AG04450 (cell line): ENCODE measurements at regions of chr16 and their contacts with region 1.

Region 1: DNA sequence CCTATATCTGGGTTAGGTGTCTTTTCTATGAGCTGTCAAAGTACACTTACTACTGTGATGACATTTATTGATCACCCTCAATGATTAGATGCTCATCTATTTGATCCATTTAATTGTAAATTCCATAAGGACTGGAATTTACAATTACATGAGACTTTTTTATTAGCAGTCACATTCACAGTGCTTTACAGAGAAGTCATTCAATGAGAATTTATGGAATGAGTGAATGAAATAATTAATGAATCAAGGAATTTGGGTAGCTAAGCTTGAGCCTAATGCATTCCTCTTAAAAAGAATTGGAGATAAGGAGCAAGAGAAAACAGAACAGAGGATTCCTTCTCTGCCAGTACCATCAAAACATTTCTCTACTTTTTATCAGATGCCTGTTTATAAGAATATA is 1437.5 kb upstream of the CDH8 start:
- DNase-seq: no peak
- H3K4me3 ChIP-seq: no peak overlapping the region
- H3K27ac ChIP-seq: no peak overlapping the region
- H3K27me3 ChIP-seq: no peaks in the 10 kb centered on the region
- CTCF ChIP-seq: no peak

Region 2: GRCh38 chr16:63458846-63459245 is 14.9 kb before region 1 on chr16:
- CTCF ChIA-PET with region 1: interaction called, 10 read pairs
- POLR2A ChIA-PET with region 1: no interaction called
- DNase-seq: no peak
- H3K4me3 ChIP-seq: no peak overlapping the region
- H3K27ac ChIP-seq: no peak overlapping the region
- H3K27me3 ChIP-seq: no peaks in the 10 kb centered on the region
- CTCF ChIP-seq: no peak

Region 3: DNA sequence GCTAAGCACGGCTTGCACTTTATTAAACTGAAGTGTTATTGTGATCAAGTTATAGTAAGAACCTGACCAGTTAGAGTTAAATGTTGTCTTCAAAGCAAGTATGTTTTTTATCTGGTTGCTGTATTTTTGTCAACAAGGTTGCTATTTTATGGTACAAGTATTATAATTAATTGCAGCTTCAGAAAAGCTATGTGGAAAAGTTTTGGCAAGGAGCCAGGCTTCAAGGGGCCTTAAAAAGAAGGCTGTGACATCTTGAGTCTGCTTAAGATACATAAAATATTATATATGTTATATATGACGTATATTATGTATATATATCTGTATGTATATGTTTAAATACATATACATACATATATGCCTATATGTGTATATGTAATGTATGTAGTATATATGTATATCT is 23.7 kb after region 1 on chr16:
- CTCF ChIA-PET with region 1: no interaction called
- POLR2A ChIA-PET with region 1: no interaction called
- DNase-seq: no peak
- H3K4me3 ChIP-seq: no peak overlapping the region
- H3K27ac ChIP-seq: no peak overlapping the region
- H3K27me3 ChIP-seq: no peaks in the 10 kb centered on the region
- CTCF ChIP-seq: no peak